ENCODE measurements at regions of chr13 and their contacts with region 1.

Region 1: GRCh38 chr13:46721054-46721453 is 75.9 kb downstream of the ESD start:
- DNase-seq: no peak
- H3K4me3 ChIP-seq: no peak overlapping the region
- CTCF ChIP-seq: peak; percentile 49

Region 2: DNA sequence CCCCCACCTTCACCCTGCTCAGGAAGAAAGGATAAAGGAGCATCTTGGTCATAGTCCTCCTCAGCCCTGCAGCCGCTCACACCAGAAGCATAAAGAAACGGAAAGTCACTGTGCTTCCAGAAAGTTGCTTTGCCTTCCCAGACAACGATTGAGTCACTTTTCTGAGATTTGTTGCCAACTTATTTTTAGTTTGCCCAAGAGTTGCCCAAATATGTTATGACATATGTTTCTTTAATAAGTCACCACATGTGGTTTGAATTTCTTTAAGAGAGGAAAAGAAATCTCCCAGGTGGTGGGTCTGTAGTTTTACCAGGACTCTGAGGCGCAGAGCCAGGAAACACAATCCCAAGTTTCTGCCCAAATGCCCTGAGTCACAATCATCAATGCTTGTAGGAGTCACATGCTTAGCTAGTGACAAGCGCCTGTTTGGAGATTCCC is 231.4 kb before region 1 on chr13:
- CTCF ChIA-PET with region 1: interaction called, 108 read pairs
- POLR2A ChIA-PET with region 1: interaction called, 3 read pairs
- DNase-seq: peak; percentile 82
- H3K4me3 ChIP-seq: peak overlapping the region; percentile 33; the same call in 1 of the 2 replicates
- CTCF ChIP-seq: no peak

Region 3: GRCh38 chr13:46495651-46496050 is 225.4 kb before region 1 on chr13:
- CTCF ChIA-PET with region 1: interaction called, 108 read pairs
- POLR2A ChIA-PET with region 1: interaction called, 3 read pairs
- DNase-seq: no peak
- H3K4me3 ChIP-seq: no peak overlapping the region
- CTCF ChIP-seq: no peak

Region 4: DNA sequence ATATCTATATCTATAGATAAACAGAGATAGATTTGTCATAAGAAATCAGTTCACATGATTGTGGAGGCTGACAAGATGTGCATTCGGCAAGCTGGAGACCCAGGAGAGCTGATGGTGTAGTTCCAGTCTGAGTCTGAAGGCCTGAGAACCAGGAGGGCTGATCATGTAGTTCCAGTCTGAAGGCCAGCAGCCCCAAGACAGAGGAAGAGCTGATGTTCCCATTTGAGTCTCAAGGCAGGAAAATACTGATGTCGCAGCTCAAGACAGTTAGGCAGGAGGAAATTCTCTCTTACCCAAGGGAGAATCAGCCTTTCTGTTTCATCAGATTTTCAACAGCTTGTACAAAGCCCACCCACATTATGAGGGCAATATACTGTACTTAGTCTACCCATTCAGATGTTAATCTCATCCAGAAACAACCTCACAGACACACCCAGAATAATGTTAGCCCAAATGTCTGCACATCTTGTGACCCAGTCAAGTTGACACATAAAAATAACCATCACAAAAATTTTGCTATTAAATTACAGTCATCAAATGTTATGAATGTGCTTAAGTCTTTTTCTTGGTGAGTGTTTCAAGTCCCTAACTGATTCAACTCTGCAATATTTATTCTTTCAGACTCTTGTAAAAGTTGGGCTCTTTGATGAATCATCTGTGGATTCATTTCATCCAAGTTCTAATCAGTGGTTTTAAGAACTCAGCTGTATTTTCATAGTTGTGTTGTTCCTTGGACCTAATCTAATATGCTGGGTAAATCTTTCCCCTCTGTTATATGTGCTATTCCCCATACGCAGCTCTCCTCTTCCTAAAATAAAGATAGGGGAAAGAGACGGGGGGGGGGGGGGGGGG is 190.7 kb before region 1 on chr13:
- CTCF ChIA-PET with region 1: interaction called, 11 read pairs
- POLR2A ChIA-PET with region 1: no interaction called
- DNase-seq: no peak
- H3K4me3 ChIP-seq: no peak overlapping the region
- CTCF ChIP-seq: no peak

Region 5: DNA sequence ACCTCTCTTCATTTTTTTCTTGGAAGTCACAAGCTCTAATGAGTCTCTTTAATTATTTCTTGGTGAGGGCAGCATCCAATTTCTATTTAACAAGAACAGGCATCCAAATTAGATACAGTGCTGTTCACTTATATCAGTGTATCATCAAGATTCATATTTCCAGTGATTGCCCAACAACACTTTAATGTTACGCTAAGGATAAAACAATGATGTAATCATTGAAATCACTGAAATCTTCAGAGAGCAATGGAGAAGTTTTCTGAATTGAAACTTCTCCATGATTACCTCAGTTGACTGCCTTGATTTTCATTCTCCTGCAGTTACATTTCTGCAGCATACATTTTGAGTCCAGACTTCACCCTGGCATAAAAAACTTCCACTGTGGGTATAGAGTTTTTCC is 185.2 kb before region 1 on chr13:
- CTCF ChIA-PET with region 1: interaction called, 11 read pairs
- POLR2A ChIA-PET with region 1: no interaction called
- DNase-seq: no peak
- H3K4me3 ChIP-seq: no peak overlapping the region
- CTCF ChIP-seq: no peak

Region 6: GRCh38 chr13:46648166-46648635 is 72.9 kb before region 1 on chr13:
- CTCF ChIA-PET with region 1: no interaction called
- POLR2A ChIA-PET with region 1: no interaction called
- DNase-seq: no peak
- H3K4me3 ChIP-seq: no peak overlapping the region
- CTCF ChIP-seq: no peak

Region 7: GRCh38 chr13:46687810-46688209 is 33.2 kb before region 1 on chr13:
- CTCF ChIA-PET with region 1: interaction called, 10 read pairs
- POLR2A ChIA-PET with region 1: no interaction called
- DNase-seq: no peak
- H3K4me3 ChIP-seq: no peak overlapping the region
- CTCF ChIP-seq: no peak